B cell (primary cell): ENCODE measurements at regions of chr17 and their contacts with region 1.

Region 1: GRCh38 chr17:20992987-20993862 is 49.6 kb downstream of the USP22 start:
- DNase-seq: peak; percentile 78
- ATAC-seq: peak; percentile 88
- H3K4me3 ChIP-seq: no peak overlapping the region
- H3K4me3 Mint-ChIP-seq: no peak overlapping the region
- H3K27ac ChIP-seq: no peak overlapping the region
- H3K27ac Mint-ChIP-seq: peak overlapping the region; percentile 50
- H3K4me1 ChIP-seq: peaks cover 0 to 4% of the 10 kb centered on the region in 2 donors
- H3K4me1 Mint-ChIP-seq: peaks cover 4% of the 10 kb centered on the region
- H3K27me3 ChIP-seq: no peaks in the 10 kb centered on the region
- H3K27me3 Mint-ChIP-seq: no peaks in the 10 kb centered on the region
- CTCF ChIP-seq: peak; percentile 91

Region 2: GRCh38 chr17:20121359-20122253 is 871.6 kb before region 1 on chr17:
- CTCF ChIA-PET with region 1: no interaction called
- POLR2A ChIA-PET with region 1: no interaction called
- intact Hi-C with region 1: loop called (anchors 2 kb)
- DNase-seq: peak; percentile 82
- ATAC-seq: peak; percentile 68
- H3K4me3 ChIP-seq: no peak overlapping the region
- H3K4me3 Mint-ChIP-seq: no peak overlapping the region
- H3K27ac ChIP-seq: no peak overlapping the region
- H3K27ac Mint-ChIP-seq: no peak overlapping the region
- H3K4me1 ChIP-seq: no peaks in the 10 kb centered on the region
- H3K4me1 Mint-ChIP-seq: no peaks in the 10 kb centered on the region
- H3K27me3 ChIP-seq: no peaks in the 10 kb centered on the region
- H3K27me3 Mint-ChIP-seq: peaks cover 15% of the 10 kb centered on the region
- CTCF ChIP-seq: peak; percentile 99

Region 3: GRCh38 chr17:20908373-20909273 is 84.6 kb before region 1 on chr17:
- CTCF ChIA-PET with region 1: interaction called, 3 read pairs
- POLR2A ChIA-PET with region 1: no interaction called
- intact Hi-C with region 1: loop called (anchors 2 kb)
- DNase-seq: peak; percentile 86
- ATAC-seq: peak; percentile 97
- H3K4me3 ChIP-seq: peak overlapping the region; percentile 7 to 80 (median 60)
- H3K4me3 Mint-ChIP-seq: peak overlapping the region; percentile 83
- H3K27ac ChIP-seq: peak overlapping the region in 1 of 2 donors; percentile 45
- H3K27ac Mint-ChIP-seq: no peak overlapping the region
- H3K4me1 ChIP-seq: peaks cover 0 to 5% of the 10 kb centered on the region in 2 donors
- H3K4me1 Mint-ChIP-seq: peaks cover 5% of the 10 kb centered on the region
- H3K27me3 ChIP-seq: no peaks in the 10 kb centered on the region
- H3K27me3 Mint-ChIP-seq: peaks cover 4% of the 10 kb centered on the region
- CTCF ChIP-seq: peak; percentile 46

Region 4: DNA sequence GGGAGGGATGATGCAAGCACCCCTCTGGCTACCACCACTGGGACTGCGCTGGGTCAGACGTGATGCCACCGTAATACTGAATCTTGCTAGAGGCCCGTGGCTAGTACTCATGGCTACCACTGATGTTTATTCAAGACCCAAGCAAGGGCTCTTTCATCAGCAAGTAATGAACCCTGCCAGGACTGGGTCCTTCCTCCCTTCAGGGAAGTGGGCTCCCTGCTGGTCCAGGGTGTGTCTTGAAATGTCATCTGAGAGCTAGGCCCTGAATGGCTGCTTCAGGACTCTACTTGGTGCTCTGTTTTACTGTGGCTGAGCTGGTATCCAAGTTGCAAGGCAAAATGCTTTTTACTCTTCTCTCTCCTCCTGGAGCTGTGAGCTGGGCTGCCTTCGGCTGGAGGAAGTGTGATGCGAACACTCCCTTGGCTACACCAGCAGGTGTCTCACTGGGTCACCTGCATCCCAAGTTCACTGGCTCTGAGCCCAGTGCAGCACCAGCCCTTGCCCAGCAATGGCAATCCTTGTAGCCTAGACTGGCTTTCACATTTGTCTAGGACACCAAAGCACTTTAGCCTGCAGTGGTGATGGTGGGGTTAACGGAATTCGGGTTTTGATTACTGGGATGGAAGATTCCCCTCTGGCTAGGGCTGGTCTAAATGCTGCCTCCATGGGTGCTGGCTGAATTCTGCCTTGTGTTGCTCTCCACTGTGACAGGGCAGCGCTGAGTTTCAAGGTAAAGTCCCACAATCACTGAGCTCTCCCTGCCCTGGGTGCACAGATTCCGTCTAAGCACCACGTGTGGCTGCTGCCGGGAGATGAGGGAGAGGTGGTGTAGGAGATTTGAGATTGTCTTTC is 49.0 kb before region 1 on chr17:
- CTCF ChIA-PET with region 1: interaction called, 23 read pairs
- POLR2A ChIA-PET with region 1: no interaction called
- intact Hi-C with region 1: no loop called
- DNase-seq: peak; percentile 51
- ATAC-seq: peak; percentile 60
- H3K4me3 ChIP-seq: no peak overlapping the region
- H3K4me3 Mint-ChIP-seq: no peak overlapping the region
- H3K27ac ChIP-seq: no peak overlapping the region
- H3K27ac Mint-ChIP-seq: no peak overlapping the region
- H3K4me1 ChIP-seq: no peaks in the 10 kb centered on the region
- H3K4me1 Mint-ChIP-seq: no peaks in the 10 kb centered on the region
- H3K27me3 ChIP-seq: peaks cover 0 to 7% (median 2%) of the 10 kb centered on the region in 4 experiments
- H3K27me3 Mint-ChIP-seq: peaks cover 11% of the 10 kb centered on the region
- CTCF ChIP-seq: peak; percentile 35

Region 5: DNA sequence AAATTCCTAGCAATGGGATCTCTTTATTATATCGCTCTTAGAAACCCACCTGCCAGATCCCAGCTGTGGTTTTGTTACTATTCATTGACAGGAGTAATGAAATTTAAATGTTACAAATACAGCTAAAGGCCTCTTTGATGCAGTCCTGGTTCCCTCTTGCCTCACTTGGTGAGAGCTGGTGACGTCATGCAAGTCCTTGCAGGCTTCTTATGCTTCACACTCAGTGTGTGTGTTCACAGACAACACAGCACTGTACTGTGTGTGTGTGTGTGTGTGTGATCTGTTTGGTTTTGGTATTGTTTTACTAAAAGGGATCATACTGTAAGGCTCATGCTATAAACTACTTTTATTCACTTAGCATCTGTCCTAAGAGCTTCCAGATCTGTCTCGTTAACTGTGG is 25.5 kb before region 1 on chr17:
- CTCF ChIA-PET with region 1: no interaction called
- POLR2A ChIA-PET with region 1: no interaction called
- intact Hi-C with region 1: loop called (anchors 2 kb)
- DNase-seq: no peak
- ATAC-seq: no peak
- H3K4me3 ChIP-seq: no peak overlapping the region
- H3K4me3 Mint-ChIP-seq: peak overlapping the region; percentile 10
- H3K27ac ChIP-seq: no peak overlapping the region
- H3K27ac Mint-ChIP-seq: no peak overlapping the region
- H3K4me1 ChIP-seq: peaks cover 47 to 49% of the 10 kb centered on the region in 2 donors
- H3K4me1 Mint-ChIP-seq: peaks cover 55% of the 10 kb centered on the region
- H3K27me3 ChIP-seq: no peaks in the 10 kb centered on the region
- H3K27me3 Mint-ChIP-seq: peaks cover 7% of the 10 kb centered on the region
- CTCF ChIP-seq: no peak

Region 6: GRCh38 chr17:21004016-21004930 is 11.0 kb after region 1 on chr17:
- CTCF ChIA-PET with region 1: interaction called, 11 read pairs
- POLR2A ChIA-PET with region 1: no interaction called
- intact Hi-C with region 1: no loop called
- DNase-seq: no peak
- ATAC-seq: no peak
- H3K4me3 ChIP-seq: no peak overlapping the region
- H3K4me3 Mint-ChIP-seq: no peak overlapping the region
- H3K27ac ChIP-seq: no peak overlapping the region
- H3K27ac Mint-ChIP-seq: no peak overlapping the region
- H3K4me1 ChIP-seq: no peaks in the 10 kb centered on the region
- H3K4me1 Mint-ChIP-seq: no peaks in the 10 kb centered on the region
- H3K27me3 ChIP-seq: no peaks in the 10 kb centered on the region
- H3K27me3 Mint-ChIP-seq: no peaks in the 10 kb centered on the region
- CTCF ChIP-seq: no peak